A673 (cell line): ENCODE measurements at regions of chr3 and their contacts with region 1.

Region 1: DNA sequence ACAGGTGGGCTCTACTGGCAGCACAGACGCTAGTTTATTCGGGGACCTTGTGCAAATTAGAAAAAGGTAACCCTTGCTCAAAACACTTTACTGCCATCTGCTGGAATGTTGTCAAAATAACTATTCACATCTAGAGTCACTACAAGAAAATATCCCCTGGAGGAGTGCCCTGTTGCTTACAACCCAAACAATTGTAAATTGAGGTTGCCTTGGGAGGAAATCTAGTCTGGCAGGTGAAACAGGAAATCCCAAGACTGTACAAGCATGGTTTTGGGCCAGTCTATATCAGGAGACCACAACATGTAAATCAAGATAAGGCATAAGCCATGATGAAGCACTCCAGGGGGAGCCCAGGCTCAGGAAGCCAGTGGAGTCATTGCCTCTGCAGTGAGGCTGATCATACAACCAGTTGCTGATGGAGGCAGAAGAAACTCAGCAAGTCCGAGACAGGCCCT is 136.8 kb upstream of the ACP3 start:
- DNase-seq: peak; percentile 82
- H3K4me3 ChIP-seq: no peak overlapping the region
- H3K27ac ChIP-seq: no peak overlapping the region
- H3K4me1 ChIP-seq: no peaks in the 10 kb centered on the region
- H3K27me3 ChIP-seq: peaks cover 2% of the 10 kb centered on the region
- CTCF ChIP-seq: peak; percentile 71

Region 2: GRCh38 chr3:131033480-131034080 is 1146.8 kb before region 1 on chr3:
- CTCF ChIA-PET with region 1: no interaction called
- POLR2A ChIA-PET with region 1: no interaction called
- intact Hi-C with region 1: loop called (anchors 10 kb)
- DNase-seq: peak; percentile 76
- H3K4me3 ChIP-seq: no peak overlapping the region
- H3K27ac ChIP-seq: no peak overlapping the region
- H3K4me1 ChIP-seq: peaks cover 15% of the 10 kb centered on the region
- H3K27me3 ChIP-seq: no peaks in the 10 kb centered on the region
- CTCF ChIP-seq: peak; percentile 83

Region 3: GRCh38 chr3:131549340-131549739 is 631.0 kb before region 1 on chr3:
- CTCF ChIA-PET with region 1: no interaction called
- POLR2A ChIA-PET with region 1: no interaction called
- intact Hi-C with region 1: loop called (anchors 10 kb)
- DNase-seq: peak; percentile 31
- H3K4me3 ChIP-seq: no peak overlapping the region
- H3K27ac ChIP-seq: no peak overlapping the region
- H3K4me1 ChIP-seq: no peaks in the 10 kb centered on the region
- H3K27me3 ChIP-seq: no peaks in the 10 kb centered on the region
- CTCF ChIP-seq: peak; percentile 76

Region 4: DNA sequence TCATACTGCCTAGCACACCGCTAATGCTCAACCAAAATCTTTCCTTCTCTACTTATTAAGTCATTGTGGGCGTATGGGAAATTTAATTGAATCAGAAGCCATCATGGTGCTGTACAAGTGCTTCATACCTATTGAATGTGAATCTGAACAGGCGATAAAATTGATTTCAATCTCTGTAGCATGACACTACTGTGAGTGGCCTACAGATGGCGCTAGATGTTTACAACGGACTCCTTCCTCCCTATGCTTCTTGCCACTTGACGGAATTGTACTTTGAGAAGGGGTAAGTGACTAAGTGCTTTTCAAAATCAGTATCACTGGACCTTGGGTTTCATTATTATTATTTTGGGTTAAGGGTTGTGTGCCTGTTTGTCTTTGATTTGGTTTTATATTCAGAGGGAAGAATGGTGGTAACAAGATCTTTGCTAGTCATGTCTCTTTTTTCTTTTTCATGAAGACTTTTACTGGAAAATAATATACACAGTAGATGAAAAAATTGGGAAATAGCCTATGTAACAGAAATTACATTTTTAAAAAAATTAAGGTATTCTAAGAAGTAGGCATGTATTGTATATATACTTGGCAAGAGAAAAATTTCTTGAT is 172.3 kb after region 1 on chr3:
- CTCF ChIA-PET with region 1: no interaction called
- POLR2A ChIA-PET with region 1: no interaction called
- intact Hi-C with region 1: no loop called
- DNase-seq: peak; percentile 77
- H3K4me3 ChIP-seq: no peak overlapping the region
- H3K27ac ChIP-seq: no peak overlapping the region
- H3K4me1 ChIP-seq: no peaks in the 10 kb centered on the region
- H3K27me3 ChIP-seq: no peaks in the 10 kb centered on the region
- CTCF ChIP-seq: peak; percentile 92

Region 5: GRCh38 chr3:132556508-132557159 is 376.3 kb after region 1 on chr3:
- CTCF ChIA-PET with region 1: no interaction called
- POLR2A ChIA-PET with region 1: no interaction called
- intact Hi-C with region 1: no loop called
- DNase-seq: peak; percentile 35
- H3K4me3 ChIP-seq: no peak overlapping the region
- H3K27ac ChIP-seq: no peak overlapping the region
- H3K4me1 ChIP-seq: no peaks in the 10 kb centered on the region
- H3K27me3 ChIP-seq: no peaks in the 10 kb centered on the region
- CTCF ChIP-seq: no peak